ENCODE measurements at regions of chr12 and their contacts with region 1.

Region 1: DNA sequence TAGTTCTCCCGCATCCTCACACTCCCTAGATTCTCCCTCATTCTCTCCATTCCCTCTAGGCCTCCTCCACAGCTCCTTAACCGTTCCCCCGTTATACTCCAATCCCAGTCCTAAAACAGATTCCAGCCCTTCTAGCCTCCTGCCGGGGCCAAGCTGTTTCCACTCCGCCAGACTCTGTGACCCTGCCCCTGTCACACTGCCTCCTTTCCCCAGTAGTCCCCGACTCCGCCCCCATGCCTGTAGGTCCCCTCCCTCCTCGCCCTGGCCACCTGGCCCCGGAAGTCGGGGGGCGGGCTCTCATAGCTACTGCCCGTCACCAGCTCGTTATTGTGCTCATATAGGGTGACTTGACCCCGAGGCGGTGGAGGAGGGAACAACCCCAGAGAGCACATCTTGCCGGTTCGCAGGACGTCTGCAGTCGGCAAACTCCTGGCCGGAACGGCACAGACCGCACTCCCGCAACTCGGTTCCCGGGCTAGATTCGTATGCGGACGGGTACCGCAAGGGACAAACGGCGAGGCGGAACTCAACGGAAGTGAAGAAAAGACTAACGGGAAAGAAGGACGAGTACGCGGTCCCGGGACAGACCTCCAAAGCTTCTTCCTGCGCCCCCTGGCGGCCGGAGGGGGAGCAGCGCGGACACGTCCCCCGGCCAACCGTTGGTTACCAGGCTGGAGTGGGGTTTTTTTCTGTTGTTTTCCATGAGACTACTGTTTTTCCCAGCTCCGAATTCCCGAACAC is at the start of gene AAAS:
- DNase-seq: peak; percentile 99
- ATAC-seq: peak; percentile 87
- H3K4me3 Mint-ChIP-seq: peak within 1 kb of the TSS; percentile 83
- H3K27ac Mint-ChIP-seq: peak within 1 kb of the TSS; percentile 96
- H3K4me1 Mint-ChIP-seq: peaks cover 41% of the 10 kb centered on the region
- H3K27me3 Mint-ChIP-seq: no peaks in the 10 kb centered on the region
- CTCF ChIP-seq: peak; percentile 100
- total RNA-seq, gene AAAS: 81.3 to 87.6 TPM

Region 2: GRCh38 chr12:53098982-53099651 is 222.1 kb before region 1 on chr12:
- CTCF ChIA-PET with region 1: interaction called, 14 read pairs
- POLR2A ChIA-PET with region 1: interaction called, 3 read pairs
- intact Hi-C with region 1: no loop called
- DNase-seq: peak; percentile 97
- ATAC-seq: peak; percentile 52
- H3K4me3 Mint-ChIP-seq: peak overlapping the region; percentile 69
- H3K27ac Mint-ChIP-seq: peak overlapping the region; percentile 86
- H3K4me1 Mint-ChIP-seq: peaks cover 51% of the 10 kb centered on the region
- H3K27me3 Mint-ChIP-seq: peaks cover 2% of the 10 kb centered on the region
- CTCF ChIP-seq: peak; percentile 93

Region 3: DNA sequence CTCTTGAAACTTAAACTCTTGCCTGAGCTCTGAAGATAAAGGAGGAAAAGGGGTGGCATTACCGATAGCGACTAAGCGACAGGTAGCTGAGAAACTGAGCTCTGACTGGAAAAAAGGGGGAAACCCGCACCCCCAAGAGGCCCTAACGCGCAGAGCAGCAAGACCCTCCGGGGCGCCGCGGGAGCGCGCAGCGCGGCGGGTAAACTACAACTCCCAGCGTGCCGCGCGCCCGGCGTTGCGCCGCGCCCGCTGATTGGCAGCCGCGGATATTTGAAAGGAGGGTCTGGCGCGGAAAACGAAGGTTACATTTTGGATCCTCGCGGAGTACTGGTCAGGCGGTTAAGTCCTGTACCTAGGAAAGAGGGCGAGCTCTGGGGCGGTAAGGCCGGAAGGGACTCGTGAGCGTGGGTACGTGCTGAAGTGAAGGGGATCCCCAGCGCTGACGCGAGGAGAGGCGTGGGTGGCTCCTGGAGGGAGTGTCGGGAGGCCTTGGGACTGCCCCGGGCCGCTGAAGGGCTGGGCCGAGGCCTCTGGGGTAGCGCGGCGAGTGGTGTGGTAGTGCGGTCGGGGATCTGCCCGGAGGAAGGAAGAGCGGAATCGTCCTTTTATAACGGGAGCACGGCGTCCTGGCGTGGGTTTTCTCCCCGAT is 53.1 kb before region 1 on chr12 and contains the start of gene ESPL1:
- CTCF ChIA-PET with region 1: interaction called, 34 read pairs
- POLR2A ChIA-PET with region 1: interaction called, 3 read pairs
- intact Hi-C with region 1: no loop called
- DNase-seq: peak; percentile 95
- ATAC-seq: peak; percentile 89
- H3K4me3 Mint-ChIP-seq: peak within 1 kb of the TSS; percentile 94
- H3K27ac Mint-ChIP-seq: peak within 1 kb of the TSS; percentile 97
- H3K4me1 Mint-ChIP-seq: peaks cover 33% of the 10 kb centered on the region
- H3K27me3 Mint-ChIP-seq: no peaks in the 10 kb centered on the region
- CTCF ChIP-seq: peak; percentile 56
- total RNA-seq, gene ESPL1: 62.1 to 63.4 TPM

Region 4: DNA sequence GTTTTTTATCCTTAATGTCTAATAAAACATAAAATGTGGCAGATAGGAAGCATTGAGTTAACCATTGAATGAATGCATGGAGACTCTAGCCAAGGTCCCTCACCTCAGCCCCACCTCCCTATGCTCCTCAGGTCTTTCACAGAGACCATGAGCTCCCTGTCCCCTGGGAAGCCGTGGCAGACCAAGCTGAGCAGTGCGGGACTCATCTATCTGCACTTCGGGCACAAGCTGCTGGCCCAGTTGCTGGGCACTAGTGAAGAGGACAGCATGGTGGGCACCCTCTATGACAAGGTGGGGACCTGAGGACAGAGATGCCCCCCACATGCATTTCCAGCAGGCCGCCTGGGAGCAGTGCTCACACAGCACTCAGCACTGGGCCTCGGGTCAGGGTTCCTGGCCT is 18.3 kb before region 1 on chr12:
- CTCF ChIA-PET with region 1: interaction called, 143 read pairs
- POLR2A ChIA-PET with region 1: interaction called, 16 read pairs
- intact Hi-C with region 1: no loop called
- DNase-seq: no peak
- ATAC-seq: no peak
- H3K4me3 Mint-ChIP-seq: peak overlapping the region; percentile 2
- H3K27ac Mint-ChIP-seq: peak overlapping the region; percentile 36
- H3K4me1 Mint-ChIP-seq: peaks cover 44% of the 10 kb centered on the region
- H3K27me3 Mint-ChIP-seq: no peaks in the 10 kb centered on the region
- CTCF ChIP-seq: no peak

Region 5: GRCh38 chr12:53352331-53353256 is 31.4 kb after region 1 on chr12:
- CTCF ChIA-PET with region 1: interaction called, 293 read pairs
- POLR2A ChIA-PET with region 1: interaction called, 4 read pairs
- intact Hi-C with region 1: no loop called
- DNase-seq: peak; percentile 93
- ATAC-seq: peak; percentile 99
- H3K4me3 Mint-ChIP-seq: no peak overlapping the region
- H3K27ac Mint-ChIP-seq: no peak overlapping the region
- H3K4me1 Mint-ChIP-seq: peaks cover 10% of the 10 kb centered on the region
- H3K27me3 Mint-ChIP-seq: no peaks in the 10 kb centered on the region
- CTCF ChIP-seq: peak; percentile 83

Region 6: DNA sequence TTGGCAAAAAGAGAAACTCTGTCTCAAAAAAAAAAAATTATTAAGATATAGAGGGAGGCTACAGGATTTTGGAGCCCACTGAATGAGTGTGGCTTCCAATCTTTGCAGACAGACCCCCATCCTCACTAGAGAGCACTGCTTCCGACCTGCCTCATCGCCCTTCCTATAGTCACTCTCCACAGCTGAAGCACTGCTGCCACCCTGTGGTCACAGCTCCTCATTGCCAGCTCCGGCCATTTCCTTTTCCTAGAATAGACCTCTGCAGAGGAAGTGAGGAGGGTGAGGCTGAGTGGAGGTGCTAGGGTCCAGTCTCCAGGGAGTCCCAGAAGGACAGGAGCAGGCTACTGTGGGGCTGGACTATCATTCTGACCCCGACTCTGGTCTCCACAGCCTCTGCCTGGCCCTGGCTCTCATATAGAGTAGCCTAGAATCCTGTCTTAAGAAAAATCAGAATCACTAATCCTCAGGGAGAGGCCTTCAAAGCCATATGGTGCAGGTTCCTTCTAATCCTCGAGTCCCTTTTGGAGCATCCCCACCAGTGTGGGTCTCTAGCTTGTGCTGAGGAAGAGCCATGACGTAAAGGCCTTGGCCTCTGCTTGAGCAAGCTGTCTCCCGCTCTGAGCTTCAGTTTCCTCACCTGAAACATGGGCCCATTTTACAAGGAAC is 187.4 kb after region 1 on chr12:
- CTCF ChIA-PET with region 1: interaction called, 23 read pairs
- POLR2A ChIA-PET with region 1: no interaction called
- intact Hi-C with region 1: no loop called
- DNase-seq: peak; percentile 93
- ATAC-seq: peak; percentile 100
- H3K4me3 Mint-ChIP-seq: no peak overlapping the region
- H3K27ac Mint-ChIP-seq: peak overlapping the region; percentile 58
- H3K4me1 Mint-ChIP-seq: peaks cover 12% of the 10 kb centered on the region
- H3K27me3 Mint-ChIP-seq: no peaks in the 10 kb centered on the region
- CTCF ChIP-seq: peak; percentile 92

Region 7: GRCh38 chr12:53575502-53576253 is 254.4 kb after region 1 on chr12:
- CTCF ChIA-PET with region 1: no interaction called
- POLR2A ChIA-PET with region 1: no interaction called
- intact Hi-C with region 1: no loop called
- DNase-seq: no peak
- ATAC-seq: no peak
- H3K4me3 Mint-ChIP-seq: no peak overlapping the region
- H3K27ac Mint-ChIP-seq: no peak overlapping the region
- H3K4me1 Mint-ChIP-seq: peaks cover 23% of the 10 kb centered on the region
- H3K27me3 Mint-ChIP-seq: no peaks in the 10 kb centered on the region
- CTCF ChIP-seq: no peak

Region 8: DNA sequence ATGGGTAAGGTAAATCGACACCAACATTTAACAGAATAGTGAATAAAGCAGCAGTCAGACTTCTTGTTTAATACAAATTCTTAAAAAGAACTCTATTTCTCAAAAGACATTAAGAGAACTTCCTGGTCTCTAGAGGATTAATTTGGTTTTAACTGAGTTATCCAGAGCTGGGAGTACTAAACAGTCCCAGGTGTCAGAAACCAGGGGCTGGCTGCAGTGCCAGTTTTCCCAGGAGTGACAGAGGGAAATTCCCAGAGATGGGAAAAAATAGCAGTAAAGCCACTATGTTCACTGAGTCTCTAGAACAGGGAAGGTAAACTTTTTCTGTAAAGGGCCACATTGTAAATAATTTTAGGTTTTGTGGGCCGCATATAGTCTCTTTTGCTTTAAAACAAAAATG is 345.8 kb after region 1 on chr12:
- CTCF ChIA-PET with region 1: no interaction called
- POLR2A ChIA-PET with region 1: no interaction called
- intact Hi-C with region 1: no loop called
- DNase-seq: no peak
- ATAC-seq: no peak
- H3K4me3 Mint-ChIP-seq: no peak overlapping the region
- H3K27ac Mint-ChIP-seq: peak overlapping the region; percentile 73
- H3K4me1 Mint-ChIP-seq: peaks cover 12% of the 10 kb centered on the region
- H3K27me3 Mint-ChIP-seq: no peaks in the 10 kb centered on the region
- CTCF ChIP-seq: no peak

Region 9: DNA sequence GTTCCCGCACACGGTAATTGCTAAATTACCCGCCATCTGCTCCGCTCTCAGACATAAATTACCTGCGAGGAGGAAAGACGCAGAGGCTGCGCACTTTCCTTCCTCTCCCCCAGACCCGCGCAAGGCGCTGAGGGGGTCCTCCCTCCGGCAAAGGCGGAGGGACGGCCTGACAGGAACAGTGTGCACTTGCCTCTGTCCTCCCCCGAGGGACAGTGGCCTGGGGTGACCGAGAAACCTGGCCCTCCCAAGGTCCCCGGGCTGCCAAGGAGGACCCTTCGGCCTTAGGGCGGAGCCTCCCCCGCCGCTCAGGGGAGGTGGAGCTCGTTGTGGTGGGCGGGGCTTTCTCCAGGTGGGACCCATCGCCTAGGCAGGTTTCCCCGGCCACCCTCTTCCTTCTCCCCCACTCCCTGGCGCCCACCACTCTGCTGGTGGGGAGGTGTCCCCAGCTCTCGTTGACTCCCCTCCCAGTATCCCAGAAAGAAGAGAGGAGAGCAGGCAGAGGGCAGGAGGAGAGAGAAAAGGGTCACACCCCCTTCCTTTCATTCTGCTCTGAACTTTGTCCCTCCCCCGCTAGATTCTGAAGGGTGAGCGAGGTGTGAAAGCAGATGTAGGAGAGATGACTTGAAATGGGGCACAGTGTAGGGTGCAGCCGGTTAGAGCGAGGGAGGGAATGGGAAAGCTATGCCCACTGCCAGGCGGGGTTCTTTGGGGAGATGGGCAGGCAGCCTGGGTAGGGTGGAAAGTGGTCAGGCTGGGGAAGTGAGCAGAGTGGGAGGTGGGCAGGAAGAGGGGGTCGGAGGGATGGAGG is 417.4 kb after region 1 on chr12:
- CTCF ChIA-PET with region 1: no interaction called
- POLR2A ChIA-PET with region 1: no interaction called
- intact Hi-C with region 1: no loop called
- DNase-seq: peak; percentile 57
- ATAC-seq: peak; percentile 80
- H3K4me3 Mint-ChIP-seq: peak overlapping the region; percentile 45
- H3K27ac Mint-ChIP-seq: no peak overlapping the region
- H3K4me1 Mint-ChIP-seq: peaks cover 19% of the 10 kb centered on the region
- H3K27me3 Mint-ChIP-seq: peaks cover 39% of the 10 kb centered on the region
- CTCF ChIP-seq: no peak

Measured in activated CD8-positive, alpha-beta T cell treated with anti-CD3 and anti-CD28 coated beads for 36 hours (primary cell).